Endothelial cell of umbilical vein (primary cell): ENCODE measurements at regions of chr21 and their contacts with region 1.

Region 1: GRCh38 chr21:46656820-46657219 is 21.3 kb downstream of the PRMT2 start:
- DNase-seq: no peak
- H3K4me3 ChIP-seq: no peak overlapping the region
- H3K27ac ChIP-seq: no peak overlapping the region
- H3K4me1 ChIP-seq: no peaks in the 10 kb centered on the region
- H3K27me3 ChIP-seq: no peaks in the 10 kb centered on the region
- CTCF ChIP-seq: no peak
- POLR2A ChIP-seq: no peak

Region 2: DNA sequence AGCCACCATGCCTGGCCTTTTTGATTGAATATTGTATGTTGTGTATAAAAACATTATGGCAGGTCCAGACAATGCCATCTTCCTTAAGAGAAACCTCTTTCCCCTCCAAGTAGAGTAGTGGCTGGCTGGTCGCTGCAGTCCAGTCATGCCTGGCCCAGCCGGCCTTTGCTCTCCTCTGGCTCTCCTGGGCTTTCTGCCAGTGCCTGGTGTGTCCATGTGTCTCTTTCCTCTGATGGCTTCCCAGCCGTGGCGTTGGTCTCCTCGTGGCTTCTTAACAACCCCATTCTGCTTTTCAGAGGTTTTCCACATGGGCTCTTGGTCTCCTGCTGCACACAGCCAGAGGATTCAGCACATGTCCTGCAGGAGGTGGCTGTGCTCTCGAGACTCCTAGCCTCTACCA is 139.5 kb before region 1 on chr21:
- CTCF ChIA-PET with region 1: no interaction called
- POLR2A ChIA-PET with region 1: no interaction called
- dilution Hi-C with region 1: no loop called
- intact Hi-C with region 1: no loop called
- DNase-seq: no peak
- H3K4me3 ChIP-seq: no peak overlapping the region
- H3K27ac ChIP-seq: no peak overlapping the region
- H3K4me1 ChIP-seq: peaks cover 17% of the 10 kb centered on the region
- H3K27me3 ChIP-seq: no peaks in the 10 kb centered on the region
- CTCF ChIP-seq: no peak
- POLR2A ChIP-seq: no peak

Region 3: GRCh38 chr21:46667741-46668380 is 11.0 kb after region 1 on chr21:
- CTCF ChIA-PET with region 1: interaction called, 6 read pairs
- POLR2A ChIA-PET with region 1: interaction called, 13 read pairs
- dilution Hi-C with region 1: no loop called
- intact Hi-C with region 1: no loop called
- DNase-seq: peak; percentile 22
- H3K4me3 ChIP-seq: peak overlapping the region; percentile 26 to 58 (median 51)
- H3K27ac ChIP-seq: no peak overlapping the region
- H3K4me1 ChIP-seq: peaks cover 14% of the 10 kb centered on the region
- H3K27me3 ChIP-seq: peaks cover 16 to 20% of the 10 kb centered on the region in 2 experiments
- CTCF ChIP-seq: no peak
- POLR2A ChIP-seq: no peak